Calu3 (cell line): ENCODE measurements at regions of chr11 and their contacts with region 1.

Region 1: GRCh38 chr11:13098063-13098462 is 88.9 kb downstream of the RASSF10 start:
- DNase-seq: peak; percentile 83
- H3K4me3 Mint-ChIP-seq: no peak overlapping the region
- H3K27ac Mint-ChIP-seq: peak overlapping the region; percentile 71
- H3K4me1 Mint-ChIP-seq: peaks cover 35% of the 10 kb centered on the region
- H3K27me3 Mint-ChIP-seq: no peaks in the 10 kb centered on the region
- CTCF ChIP-seq: no peak

Region 2: DNA sequence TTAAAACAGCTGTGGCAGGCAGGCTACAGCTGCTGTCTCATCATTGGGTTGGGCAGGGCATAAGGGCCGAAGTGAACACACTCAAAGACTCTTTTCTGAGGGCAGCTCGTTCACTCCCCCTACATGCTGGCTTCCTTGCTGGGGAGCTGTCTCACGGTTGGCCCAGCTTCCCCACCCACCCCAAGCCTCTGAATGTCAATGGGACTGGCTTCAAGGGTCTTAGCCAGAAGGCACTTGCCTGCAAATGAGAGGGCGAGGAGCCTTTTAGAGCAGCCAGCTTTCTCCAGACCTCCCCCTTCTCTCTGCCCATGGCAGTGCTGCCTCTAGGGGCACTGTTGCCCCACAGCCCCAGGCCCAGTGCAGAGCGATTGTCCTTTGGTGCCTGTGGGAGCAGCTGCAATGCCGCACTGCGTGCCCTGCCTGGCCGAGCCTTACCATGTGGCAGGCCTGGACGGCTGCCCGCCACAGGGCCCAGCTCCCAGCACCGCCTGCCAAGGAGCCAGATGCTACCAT is 183.6 kb before region 1 on chr11:
- CTCF ChIA-PET with region 1: no interaction called
- intact Hi-C with region 1: no loop called
- DNase-seq: peak; percentile 36
- H3K4me3 Mint-ChIP-seq: no peak overlapping the region
- H3K27ac Mint-ChIP-seq: no peak overlapping the region
- H3K4me1 Mint-ChIP-seq: no peaks in the 10 kb centered on the region
- H3K27me3 Mint-ChIP-seq: no peaks in the 10 kb centered on the region
- CTCF ChIP-seq: peak; percentile 34

Region 3: DNA sequence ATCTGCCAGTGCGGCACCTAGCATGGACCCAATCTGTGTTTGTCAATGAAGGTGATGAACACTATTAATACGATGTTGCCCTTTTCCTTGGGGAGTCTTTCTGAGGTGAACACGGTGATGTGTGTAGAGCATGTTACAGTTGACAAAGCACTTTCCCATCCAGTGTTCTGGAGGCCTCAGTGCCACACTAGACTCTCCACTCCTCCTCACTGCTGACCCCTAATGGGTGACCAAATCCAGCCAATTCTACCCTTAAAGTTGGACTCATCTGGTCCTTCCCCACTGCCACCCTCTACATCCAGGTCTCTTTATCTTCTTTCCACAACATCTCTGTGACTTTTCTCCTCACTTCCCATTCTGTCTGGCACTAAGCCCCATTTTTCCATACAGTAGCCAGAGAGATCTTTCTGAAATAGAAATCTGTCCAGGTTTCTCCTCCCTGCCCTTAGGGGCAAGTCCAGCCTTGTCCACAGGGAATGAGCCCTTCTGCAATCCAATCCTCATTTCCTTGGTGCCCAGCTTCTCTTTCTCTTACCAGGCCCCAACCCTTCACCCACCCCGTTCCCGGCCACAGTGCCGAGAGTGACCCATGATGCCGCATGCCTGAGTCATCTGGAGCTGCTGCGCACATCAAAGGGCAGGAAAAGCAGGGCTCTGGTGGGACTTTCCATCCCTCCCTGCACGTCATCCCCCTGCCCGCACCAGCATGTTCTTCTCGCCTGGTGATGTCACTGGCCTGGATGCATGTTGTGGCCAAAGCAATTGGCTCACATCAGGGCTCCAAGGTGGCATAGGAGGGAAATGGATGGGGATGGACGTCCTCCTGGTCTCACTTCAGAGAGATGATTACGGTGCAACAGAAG is 24.7 kb before region 1 on chr11:
- CTCF ChIA-PET with region 1: no interaction called
- intact Hi-C with region 1: no loop called
- DNase-seq: peak; percentile 85
- H3K4me3 Mint-ChIP-seq: peak overlapping the region; percentile 5
- H3K27ac Mint-ChIP-seq: peak overlapping the region; percentile 94
- H3K4me1 Mint-ChIP-seq: peaks cover 51% of the 10 kb centered on the region
- H3K27me3 Mint-ChIP-seq: no peaks in the 10 kb centered on the region
- CTCF ChIP-seq: no peak

Region 4: DNA sequence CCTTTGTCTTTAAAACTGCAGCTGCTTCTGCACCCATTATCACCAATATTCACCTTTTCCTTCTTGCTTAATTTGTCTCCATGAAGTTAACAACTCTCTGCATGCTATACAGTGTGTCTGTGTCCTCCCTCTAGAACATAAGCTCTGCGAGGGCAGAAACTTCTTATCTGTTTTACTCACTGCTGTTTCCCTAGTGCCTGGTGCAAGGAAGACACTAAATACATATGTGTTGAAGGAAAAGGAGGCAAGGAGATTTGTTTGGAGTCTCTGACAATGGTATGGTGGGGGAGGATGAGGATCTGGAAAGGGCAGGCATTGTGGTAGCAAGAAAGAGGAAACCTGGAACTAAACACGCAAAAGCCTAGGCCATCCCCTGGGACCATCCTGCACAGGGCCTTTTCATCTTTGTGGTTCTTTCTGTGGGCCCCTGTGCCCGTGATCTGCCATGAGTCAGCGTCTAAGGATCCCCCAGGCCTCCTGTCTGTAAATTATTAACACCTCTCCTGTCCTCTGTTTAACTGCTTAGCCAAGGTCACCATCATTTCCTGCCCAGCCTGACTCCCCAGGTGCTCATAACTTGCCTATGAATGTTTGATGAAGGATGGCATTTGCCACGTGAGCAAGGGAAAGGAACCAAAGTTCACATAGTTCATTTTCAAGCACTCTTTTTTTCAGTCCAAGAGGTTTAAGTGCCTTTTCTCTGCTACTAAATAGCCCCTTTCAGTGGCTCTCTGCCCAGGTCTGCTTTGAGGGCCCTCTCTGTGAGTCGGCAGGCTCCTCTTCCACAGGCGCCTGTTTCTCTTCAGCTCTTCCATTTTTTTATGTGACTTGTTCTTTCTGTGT is 42.2 kb after region 1 on chr11:
- CTCF ChIA-PET with region 1: interaction called, 3 read pairs
- intact Hi-C with region 1: loop called (anchors 5 kb)
- DNase-seq: peak; percentile 80
- H3K4me3 Mint-ChIP-seq: peak overlapping the region; percentile 14
- H3K27ac Mint-ChIP-seq: peak overlapping the region; percentile 79
- H3K4me1 Mint-ChIP-seq: peaks cover 91% of the 10 kb centered on the region
- H3K27me3 Mint-ChIP-seq: no peaks in the 10 kb centered on the region
- CTCF ChIP-seq: no peak